ENCODE measurements at regions of chr1 and their contacts with region 1.

Region 1: DNA sequence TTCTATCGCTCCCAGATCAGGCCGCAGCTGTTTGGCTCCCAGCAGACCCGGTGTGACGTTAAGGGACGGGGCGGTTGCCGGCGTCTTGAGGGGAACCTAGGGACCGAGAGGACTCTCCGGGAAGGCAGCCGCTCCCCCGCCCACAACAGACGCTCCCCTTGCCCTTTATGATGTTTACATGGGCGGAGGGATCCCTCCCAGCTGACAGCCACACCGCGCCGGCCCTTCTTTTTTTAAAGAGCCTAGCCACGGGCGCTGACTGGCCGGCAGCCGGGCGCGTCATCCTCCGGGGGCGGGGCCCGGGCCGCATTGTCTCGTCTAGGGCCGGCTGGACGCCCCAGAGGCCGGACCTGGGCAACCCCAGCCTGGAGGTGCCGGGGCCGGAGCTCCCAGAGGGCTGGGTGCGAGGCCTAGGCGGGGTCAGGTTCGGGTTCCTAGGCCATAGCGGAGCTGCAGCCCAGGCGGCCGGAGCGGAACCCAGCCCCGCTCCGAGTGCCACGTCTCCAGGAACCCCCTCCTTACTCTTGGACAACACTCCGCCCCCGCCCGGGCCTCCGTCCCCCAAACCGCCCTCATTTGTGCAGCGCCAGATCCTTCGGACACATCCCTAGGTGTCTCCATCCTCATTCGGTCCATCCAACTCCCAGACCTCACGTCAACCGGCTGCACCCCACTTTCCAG is at the start of gene PCAT6:
- DNase-seq: peak; percentile 93 to 96
- H3K4me3 ChIP-seq: peak within 1 kb of the TSS; percentile 74 to 93 (median 84)
- H3K27ac ChIP-seq: peak within 1 kb of the TSS; percentile 67
- H3K4me1 ChIP-seq: peaks cover 12 to 22% (median 16%) of the 10 kb centered on the region in 4 experiments
- H3K27me3 ChIP-seq: peaks cover 0 to 5% (median 2%) of the 10 kb centered on the region in 4 experiments; a peak in 2 of 7 replicates
- CTCF ChIP-seq: no peak
- EP300 ChIP-seq: peak in 1 of 2 experiments; percentile 68; a peak in 1 of 3 replicates
- POLR2A ChIP-seq: peak; percentile 73 to 98
- RAD21 ChIP-seq: no peak; a peak in 1 of 4 replicates
- total RNA-seq, gene PCAT6: 4.6 and 6.4 TPM in 2 replicates

Region 2: DNA sequence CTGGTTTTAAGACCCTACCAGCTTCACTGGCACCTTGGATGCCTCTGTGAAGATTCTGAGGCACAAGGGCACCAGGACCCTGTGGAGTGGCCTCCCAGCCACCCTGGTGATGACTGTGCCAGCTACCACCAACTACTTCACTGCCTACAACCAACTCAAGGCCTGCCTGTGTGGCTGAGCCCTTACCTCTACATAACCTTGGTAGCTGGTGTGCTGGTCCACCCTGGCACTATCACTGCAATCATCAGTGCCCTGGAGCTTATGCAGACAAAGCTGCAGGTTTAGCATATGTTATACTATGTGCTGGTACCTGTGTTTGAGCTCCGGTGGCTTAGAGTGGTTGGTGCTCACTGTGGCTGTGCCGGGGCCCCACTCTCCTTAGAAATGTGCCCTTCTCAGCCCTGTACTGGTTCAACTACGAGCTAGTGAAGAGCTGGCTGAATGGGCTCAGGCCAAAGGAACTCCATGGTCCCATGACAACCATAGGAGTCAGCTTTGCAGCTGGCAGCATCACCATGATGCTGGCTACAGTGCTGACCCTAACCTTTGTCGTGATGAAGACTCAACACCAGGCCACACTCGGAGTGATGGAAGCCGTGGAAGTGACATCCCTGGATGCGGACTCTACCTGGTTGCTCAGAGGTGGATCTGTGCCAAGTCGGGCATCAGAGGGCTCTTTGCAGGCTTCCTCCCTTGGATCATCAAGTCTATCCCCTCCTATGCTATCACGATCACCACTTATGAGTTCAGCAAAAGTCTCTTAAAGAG is 14.3 kb before region 1 on chr1:
- CTCF ChIA-PET with region 1: interaction called, 6 read pairs
- POLR2A ChIA-PET with region 1: interaction called, 23 read pairs
- DNase-seq: peak in 1 of 2 experiments; percentile 41
- H3K4me3 ChIP-seq: no peak overlapping the region
- H3K27ac ChIP-seq: no peak overlapping the region
- H3K4me1 ChIP-seq: peaks cover 0 to 5% (median 3%) of the 10 kb centered on the region in 4 experiments; a peak in 5 of 7 replicates
- H3K27me3 ChIP-seq: no peaks in the 10 kb centered on the region
- CTCF ChIP-seq: no peak
- EP300 ChIP-seq: no peak
- POLR2A ChIP-seq: no peak
- RAD21 ChIP-seq: no peak

Region 3: GRCh38 chr1:202835548-202836090 is 24.9 kb after region 1 on chr1:
- CTCF ChIA-PET with region 1: interaction called, 4 read pairs
- POLR2A ChIA-PET with region 1: interaction called, 10 read pairs
- DNase-seq: no peak
- H3K4me3 ChIP-seq: no peak overlapping the region
- H3K27ac ChIP-seq: no peak overlapping the region
- H3K4me1 ChIP-seq: peaks cover 0 to 6% (median 5%) of the 10 kb centered on the region in 4 experiments; a peak in 6 of 7 replicates
- H3K27me3 ChIP-seq: no peaks in the 10 kb centered on the region
- CTCF ChIP-seq: no peak
- EP300 ChIP-seq: no peak
- POLR2A ChIP-seq: no peak
- RAD21 ChIP-seq: no peak

Region 4: GRCh38 chr1:202852163-202852904 is 41.6 kb after region 1 on chr1:
- CTCF ChIA-PET with region 1: interaction called, 41 read pairs
- POLR2A ChIA-PET with region 1: interaction called, 81 read pairs
- DNase-seq: peak; percentile 62 to 70
- H3K4me3 ChIP-seq: no peak overlapping the region
- H3K27ac ChIP-seq: no peak overlapping the region
- H3K4me1 ChIP-seq: no peaks in the 10 kb centered on the region
- H3K27me3 ChIP-seq: no peaks in the 10 kb centered on the region
- CTCF ChIP-seq: peak; percentile 81 to 90 (median 83)
- EP300 ChIP-seq: no peak
- POLR2A ChIP-seq: no peak
- RAD21 ChIP-seq: peak; percentile 84 to 87

Region 5: GRCh38 chr1:202944438-202944921 is 133.7 kb after region 1 on chr1:
- CTCF ChIA-PET with region 1: no interaction called
- POLR2A ChIA-PET with region 1: no interaction called
- DNase-seq: no peak
- H3K4me3 ChIP-seq: no peak overlapping the region
- H3K27ac ChIP-seq: no peak overlapping the region
- H3K4me1 ChIP-seq: no peaks in the 10 kb centered on the region
- H3K27me3 ChIP-seq: no peaks in the 10 kb centered on the region
- CTCF ChIP-seq: no peak
- EP300 ChIP-seq: no peak
- POLR2A ChIP-seq: no peak
- RAD21 ChIP-seq: no peak

Region 6: GRCh38 chr1:203006948-203007871 is 196.5 kb after region 1 on chr1 and contains the start of gene TMEM183A:
- CTCF ChIA-PET with region 1: interaction called, 3 read pairs
- POLR2A ChIA-PET with region 1: interaction called, 12 read pairs
- DNase-seq: peak; percentile 90 to 95
- H3K4me3 ChIP-seq: peak within 1 kb of the TSS; percentile 81 to 99 (median 97)
- H3K27ac ChIP-seq: peak within 1 kb of the TSS; percentile 97
- H3K4me1 ChIP-seq: peaks cover 0 to 4% (median 1%) of the 10 kb centered on the region in 4 experiments; a peak in 3 of 7 replicates
- H3K27me3 ChIP-seq: no peaks in the 10 kb centered on the region
- CTCF ChIP-seq: no peak
- EP300 ChIP-seq: no peak
- POLR2A ChIP-seq: peak; percentile 98 to 99
- RAD21 ChIP-seq: no peak
- total RNA-seq, gene TMEM183A: 107 TPM in 2 replicates

Measured in H1 (cell line).